ENCODE measurements at regions of chr2 and their contacts with region 1.

Region 1: DNA sequence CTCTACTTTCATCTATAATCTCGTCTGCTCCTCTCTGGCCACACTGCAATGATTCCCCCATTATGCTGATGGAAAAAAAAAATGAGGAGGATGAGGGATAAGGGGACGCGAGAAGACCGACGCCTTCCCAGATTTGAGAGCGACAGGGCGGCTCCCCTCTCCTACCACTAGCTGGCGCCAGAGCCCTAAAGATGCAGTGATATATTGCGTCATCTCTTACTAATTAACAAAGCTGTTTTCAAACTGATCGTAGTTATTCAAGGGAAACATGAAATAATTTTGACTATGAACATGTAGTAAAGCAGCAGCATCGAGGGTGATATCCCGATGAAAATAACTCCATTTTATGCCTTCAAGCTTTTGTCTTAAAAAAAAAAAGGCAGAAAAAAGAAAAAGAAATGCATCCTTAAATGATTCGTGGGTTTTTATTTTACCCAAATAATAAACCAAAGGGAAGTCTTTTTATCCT is 48.0 kb upstream of the HNRNPA3 start:
- DNase-seq: peak; percentile 82
- ATAC-seq: peak; percentile 84 to 91

Region 2: GRCh38 chr2:176947754-176948153 is 216.9 kb before region 1 on chr2:
- intact Hi-C with region 1: no loop called
- DNase-seq: no peak
- ATAC-seq: no peak

Region 3: DNA sequence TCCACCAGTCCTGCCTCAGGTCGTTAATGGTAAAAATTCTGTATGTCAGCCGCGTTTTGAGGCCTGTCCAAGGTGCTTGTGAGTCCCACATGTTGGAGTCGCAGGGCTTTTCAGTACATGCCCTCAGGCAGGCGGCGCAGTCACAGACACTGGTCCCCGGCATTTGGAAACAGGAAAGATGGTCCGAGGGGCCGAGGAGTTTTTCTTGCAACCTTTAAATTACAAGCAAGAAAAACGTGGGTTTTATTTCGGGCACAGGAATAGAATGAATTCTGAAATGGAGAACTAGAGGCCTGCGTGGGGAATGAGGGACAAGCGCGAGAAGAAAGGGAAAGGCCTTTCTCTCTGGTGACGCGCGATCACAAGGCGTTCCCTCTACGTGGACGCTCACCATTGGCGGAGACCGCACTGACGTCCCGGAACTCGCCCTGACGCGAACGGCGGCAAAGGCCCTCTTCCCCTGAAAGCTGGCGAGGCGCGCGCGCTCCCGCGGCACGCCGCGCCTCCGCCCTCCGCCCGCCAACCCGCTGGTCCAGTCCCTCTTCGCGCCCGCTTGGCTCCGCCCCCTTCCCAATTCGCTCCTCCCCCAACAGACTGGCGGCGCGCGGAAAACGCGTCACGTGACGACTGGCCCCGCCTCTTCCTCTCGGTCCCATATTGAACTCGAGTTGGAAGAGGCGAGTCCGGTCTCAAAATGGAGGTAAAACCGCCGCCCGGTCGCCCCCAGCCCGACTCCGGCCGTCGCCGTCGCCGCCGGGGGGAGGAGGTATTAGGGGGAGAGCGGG is 47.7 kb after region 1 on chr2 and contains the start of gene HNRNPA3:
- intact Hi-C with region 1: loop called in 1 of 2 experiments (anchors 5 kb)
- DNase-seq: peak; percentile 99
- ATAC-seq: peak; percentile 95 to 96
- total RNA-seq, gene HNRNPA3: 81.3 to 117 TPM

Region 4: DNA sequence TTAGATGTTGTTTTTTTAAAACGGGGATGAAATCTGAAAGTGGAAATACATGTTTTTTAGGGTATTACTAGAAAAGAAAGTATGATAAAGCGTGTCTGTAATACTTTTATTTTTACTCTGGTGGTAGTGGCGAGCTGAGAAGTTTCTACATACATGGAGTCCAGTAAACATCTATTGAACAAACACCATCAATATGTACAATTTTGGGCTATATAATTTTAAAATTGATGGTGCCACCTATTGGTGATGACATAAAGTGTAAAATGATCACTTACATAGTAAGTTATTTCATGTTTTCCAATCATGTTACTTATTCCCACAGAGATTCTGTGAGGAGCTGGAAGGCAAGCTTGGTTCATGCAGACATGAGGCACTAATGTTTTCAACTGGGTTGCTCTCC is 131.4 kb after region 1 on chr2:
- intact Hi-C with region 1: loop called in 1 of 2 experiments (anchors 10 kb)
- DNase-seq: no peak
- ATAC-seq: peak; percentile 23 to 56

Region 5: DNA sequence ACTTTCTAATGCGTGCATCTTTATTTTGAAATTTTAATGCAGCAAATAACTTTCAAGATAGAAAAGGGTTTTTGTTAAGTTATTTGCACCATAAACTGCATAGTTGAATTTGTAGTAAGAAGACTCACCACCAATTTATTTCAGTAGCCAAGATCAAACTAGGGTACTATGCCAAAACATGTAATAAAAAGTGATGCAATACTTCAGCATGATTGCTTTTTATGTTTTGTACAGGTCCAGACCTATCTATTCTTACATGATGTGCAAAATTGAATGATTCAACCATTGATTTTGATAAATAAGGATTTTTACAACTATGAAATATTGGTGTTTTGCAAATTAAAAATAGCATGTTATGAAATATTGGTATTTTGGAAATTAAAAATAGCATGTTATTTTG is 254.7 kb after region 1 on chr2:
- intact Hi-C with region 1: loop called in 1 of 2 experiments (anchors 5 kb)
- DNase-seq: no peak
- ATAC-seq: peak; percentile 38 to 51

Region 6: DNA sequence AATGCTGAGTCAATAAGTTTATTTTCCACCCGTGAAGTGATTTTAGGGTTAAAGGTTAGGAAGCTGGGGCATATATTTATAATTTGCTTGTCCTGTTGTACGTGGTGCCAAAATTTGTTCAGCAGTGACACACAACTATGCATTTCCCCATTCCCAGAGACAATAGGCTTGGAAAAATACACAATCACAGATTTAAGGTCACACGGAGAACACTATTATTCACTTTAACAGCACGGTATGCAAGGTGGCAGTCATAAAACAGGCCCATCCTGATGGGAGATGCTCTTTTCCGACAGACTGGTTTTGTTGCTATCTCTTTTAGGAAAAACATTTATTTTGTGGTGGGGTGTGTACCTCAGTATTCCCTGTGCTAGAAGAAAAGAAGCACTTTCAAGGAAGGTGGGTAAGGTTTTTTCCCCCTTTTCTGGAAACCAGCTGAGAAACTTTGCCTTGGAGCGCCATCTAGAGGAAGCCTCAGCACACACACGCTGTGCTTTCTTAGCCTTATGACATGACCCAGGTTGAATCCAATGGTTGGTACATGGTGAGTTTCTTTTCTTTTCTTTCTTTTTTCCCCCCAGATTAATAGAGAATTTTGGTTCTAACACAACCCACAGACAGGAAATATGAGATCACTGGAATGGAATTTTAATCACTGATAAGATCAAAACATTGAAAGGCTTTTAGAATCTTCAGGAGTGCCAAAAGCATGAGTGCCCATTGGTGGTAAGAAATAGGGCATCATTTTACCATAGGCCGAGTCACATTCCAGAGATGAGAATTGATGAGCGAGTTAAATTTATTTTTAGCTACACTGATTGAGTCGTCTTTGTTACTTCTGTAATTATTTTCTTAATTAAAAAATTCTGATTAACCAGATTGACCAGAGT is 560.0 kb after region 1 on chr2:
- intact Hi-C with region 1: loop called in 1 of 2 experiments (anchors 10 kb)
- DNase-seq: peak; percentile 41
- ATAC-seq: peak; percentile 66 to 71

Measured in left cardiac atrium (tissue), 4 donors.